HEK293 (cell line): ENCODE measurements at regions of chr9 and their contacts with region 1.

Region 1: GRCh38 chr9:27726244-27727081 is 153.2 kb upstream of the C9orf72 start:
- H3K4me3 ChIP-seq: no peak overlapping the region
- H3K27ac ChIP-seq: no peak overlapping the region
- H3K4me1 ChIP-seq: no peaks in the 10 kb centered on the region
- CTCF ChIP-seq: peak; percentile 28; the same call in 1 of the 2 replicates

Region 2: DNA sequence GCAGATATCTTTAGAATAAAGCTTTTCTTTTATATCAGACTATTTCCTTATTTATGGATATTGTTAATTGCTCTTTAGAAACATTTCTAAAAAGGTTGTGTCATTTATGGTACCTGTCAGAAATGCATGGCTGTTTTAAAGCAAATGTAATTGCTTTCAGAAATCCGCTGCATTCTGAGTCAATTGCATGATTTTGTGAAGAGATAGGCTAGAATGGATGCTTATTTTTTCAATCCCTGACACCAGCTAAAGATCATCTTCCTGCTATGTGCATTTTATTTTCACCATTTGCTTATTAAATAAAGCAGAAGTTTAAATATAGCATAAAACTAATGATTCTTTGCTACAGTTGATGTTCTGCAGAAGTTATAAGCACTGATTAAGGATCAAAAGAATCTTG is 17.0 kb after region 1 on chr9:
- CTCF ChIA-PET with region 1: interaction called, 10 read pairs
- POLR2A ChIA-PET with region 1: no interaction called
- H3K4me3 ChIP-seq: no peak overlapping the region
- H3K27ac ChIP-seq: no peak overlapping the region
- H3K4me1 ChIP-seq: no peaks in the 10 kb centered on the region
- CTCF ChIP-seq: no peak

Region 3: DNA sequence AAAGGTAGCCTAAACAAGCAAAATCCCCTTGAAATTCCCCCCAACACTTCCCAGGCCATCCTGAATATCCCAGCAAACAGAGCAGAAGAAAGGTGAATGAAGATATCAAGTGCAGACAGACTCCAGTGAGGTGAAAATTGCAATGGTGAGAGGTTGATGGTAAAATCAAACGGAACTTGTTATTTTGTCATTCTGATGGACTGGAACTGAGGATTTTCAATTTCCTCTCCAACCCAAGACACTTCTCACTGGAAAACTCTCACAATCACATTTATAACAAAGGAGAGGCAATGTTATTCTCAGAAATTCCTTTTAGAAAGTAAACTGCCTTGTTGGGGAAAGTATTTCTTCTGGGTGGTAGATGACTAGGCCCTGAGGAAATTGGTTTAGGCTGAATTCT is 259.3 kb after region 1 on chr9:
- CTCF ChIA-PET with region 1: no interaction called
- POLR2A ChIA-PET with region 1: no interaction called
- H3K4me3 ChIP-seq: no peak overlapping the region
- H3K27ac ChIP-seq: no peak overlapping the region
- H3K4me1 ChIP-seq: no peaks in the 10 kb centered on the region
- CTCF ChIP-seq: no peak

Region 4: DNA sequence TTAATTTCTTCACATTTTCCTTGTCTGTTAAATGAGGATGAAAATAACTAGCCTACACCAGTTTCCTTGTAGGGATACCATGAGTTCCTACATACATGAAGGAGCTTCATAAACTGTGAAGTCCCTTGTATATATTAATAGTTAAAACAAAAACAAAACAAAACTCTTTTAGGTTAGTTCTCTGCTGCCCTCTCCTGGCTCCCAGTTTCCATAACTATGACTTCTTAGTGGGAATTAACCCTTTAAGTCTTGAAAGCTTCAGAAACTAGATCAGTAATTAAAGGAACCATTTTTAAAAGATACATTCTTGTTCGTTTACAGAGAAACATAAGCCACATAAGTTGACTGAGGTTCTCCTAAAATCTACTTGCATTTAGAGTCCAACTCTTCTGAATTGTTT is 346.8 kb after region 1 on chr9:
- CTCF ChIA-PET with region 1: interaction called, 79 read pairs
- POLR2A ChIA-PET with region 1: no interaction called
- H3K4me3 ChIP-seq: no peak overlapping the region
- H3K27ac ChIP-seq: no peak overlapping the region
- H3K4me1 ChIP-seq: no peaks in the 10 kb centered on the region
- CTCF ChIP-seq: no peak